ENCODE measurements at regions of chr9 and their contacts with region 1.

Region 1: DNA sequence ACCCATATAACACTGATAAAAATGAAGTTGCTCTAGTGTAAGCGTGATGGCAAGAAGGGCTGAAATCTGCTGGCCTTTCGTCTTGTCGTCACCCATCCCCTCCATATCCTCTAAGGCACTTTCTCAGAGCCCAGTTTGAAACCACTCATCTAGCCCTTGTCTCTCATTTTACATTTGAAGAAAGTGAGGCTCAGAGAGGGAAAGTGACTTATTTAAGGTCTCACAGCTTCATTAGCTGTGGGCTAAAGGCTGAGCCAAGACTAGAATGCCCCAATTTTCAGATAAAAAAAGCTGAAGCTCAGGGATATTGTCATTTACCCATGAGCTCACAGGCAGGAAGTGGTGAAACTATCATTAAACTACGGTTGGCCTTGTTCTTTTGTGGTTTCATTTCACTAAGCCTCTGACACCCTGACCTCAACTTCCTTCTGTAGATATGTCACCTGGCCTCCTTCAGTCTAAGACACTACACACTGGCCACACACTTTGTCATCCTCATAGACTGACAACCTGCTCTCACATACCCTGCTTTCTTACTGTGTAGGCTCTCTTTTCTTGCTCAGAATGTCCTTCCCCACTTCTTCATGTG is 176.7 kb upstream of the DMAC1 start:
- DNase-seq: peak; percentile 69
- H3K4me3 Mint-ChIP-seq: no peak overlapping the region
- H3K27ac Mint-ChIP-seq: peak overlapping the region; percentile 63
- H3K4me1 Mint-ChIP-seq: peaks cover 66% of the 10 kb centered on the region
- H3K27me3 Mint-ChIP-seq: no peaks in the 10 kb centered on the region

Region 2: GRCh38 chr9:6894135-6894534 is 1082.1 kb before region 1 on chr9:
- intact Hi-C with region 1: loop called (anchors 1 kb)
- DNase-seq: no peak
- H3K4me3 Mint-ChIP-seq: peak overlapping the region; percentile 19
- H3K27ac Mint-ChIP-seq: peak overlapping the region; percentile 74
- H3K4me1 Mint-ChIP-seq: peaks cover 51% of the 10 kb centered on the region
- H3K27me3 Mint-ChIP-seq: no peaks in the 10 kb centered on the region

Region 3: GRCh38 chr9:7298123-7298522 is 678.1 kb before region 1 on chr9:
- intact Hi-C with region 1: loop called (anchors 1 kb)
- DNase-seq: peak; percentile 27
- H3K4me3 Mint-ChIP-seq: no peak overlapping the region
- H3K27ac Mint-ChIP-seq: peak overlapping the region; percentile 44
- H3K4me1 Mint-ChIP-seq: peaks cover 21% of the 10 kb centered on the region
- H3K27me3 Mint-ChIP-seq: peaks cover 28% of the 10 kb centered on the region

Region 4: DNA sequence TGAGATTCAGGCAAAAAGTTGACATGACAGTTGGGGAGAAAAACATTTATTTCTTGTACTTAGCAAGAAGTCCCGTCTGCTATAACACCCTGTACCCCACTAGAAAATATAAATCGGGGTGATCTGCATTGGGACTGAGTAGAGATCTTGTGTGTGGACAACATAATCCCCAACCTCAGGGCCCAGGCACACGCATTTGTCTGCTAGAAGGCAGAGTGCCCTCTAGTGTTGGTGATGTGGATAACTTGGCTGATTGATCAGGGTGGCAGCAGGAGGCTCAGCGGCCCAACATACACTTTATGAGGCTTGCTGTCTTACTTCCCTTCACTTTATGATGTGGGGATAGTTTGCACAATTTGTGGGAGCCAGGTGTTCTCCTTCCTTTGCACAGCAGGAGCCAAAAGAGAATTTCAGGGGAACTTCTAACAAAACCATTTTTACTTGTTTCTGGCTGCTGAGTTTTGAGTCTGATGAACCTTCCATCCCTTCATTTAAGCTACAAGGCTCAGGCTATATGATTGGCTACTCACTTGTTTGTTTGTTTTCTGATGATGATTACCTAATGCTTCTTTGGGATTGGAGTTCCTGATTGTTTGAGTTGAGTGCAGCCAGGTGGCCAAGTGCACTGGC is 439.8 kb before region 1 on chr9:
- intact Hi-C with region 1: loop called (anchors 1 kb)
- DNase-seq: peak; percentile 29
- H3K4me3 Mint-ChIP-seq: no peak overlapping the region
- H3K27ac Mint-ChIP-seq: no peak overlapping the region
- H3K4me1 Mint-ChIP-seq: peaks cover 37% of the 10 kb centered on the region
- H3K27me3 Mint-ChIP-seq: peaks cover 10% of the 10 kb centered on the region

Region 5: DNA sequence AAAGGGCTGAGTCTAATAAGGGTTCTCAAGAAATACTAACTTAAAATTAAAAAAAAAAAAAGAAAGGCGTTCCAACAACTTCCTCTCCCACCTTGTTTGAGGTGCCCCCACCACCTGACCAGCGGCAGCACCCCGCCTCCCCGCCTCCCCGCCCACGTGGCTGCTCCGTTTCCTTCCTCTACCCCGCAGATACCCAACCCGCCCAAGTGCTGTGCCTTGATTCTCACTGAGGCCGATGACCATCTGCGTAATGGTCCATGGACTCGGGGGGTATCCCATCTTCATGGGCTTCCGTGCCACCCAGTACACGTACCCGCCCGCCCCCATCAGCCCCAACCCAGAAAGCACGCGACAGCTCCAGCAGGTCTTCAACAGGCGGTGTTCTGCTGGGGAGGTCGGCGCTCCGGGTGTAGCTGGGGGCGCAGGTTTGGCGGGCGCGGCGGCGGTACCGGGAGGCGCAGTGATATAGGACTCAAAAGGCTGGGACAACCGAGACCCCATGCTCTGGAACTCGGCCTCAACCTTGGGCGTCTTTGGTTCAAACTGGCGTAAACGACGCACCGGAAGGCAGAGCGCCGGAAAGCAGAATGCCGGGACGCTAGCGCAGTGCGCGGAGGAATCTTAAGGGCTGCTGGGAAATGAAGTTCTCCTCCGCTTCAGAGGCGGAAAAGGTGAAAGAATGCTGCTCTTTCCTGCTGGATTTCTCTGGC is 176.9 kb before region 1 on chr9 and contains the start of gene DMAC1:
- intact Hi-C with region 1: loop called (anchors 1 kb)
- DNase-seq: peak; percentile 70
- H3K4me3 Mint-ChIP-seq: peak within 1 kb of the TSS; percentile 90
- H3K27ac Mint-ChIP-seq: peak within 1 kb of the TSS; percentile 89
- H3K4me1 Mint-ChIP-seq: peaks cover 23% of the 10 kb centered on the region
- H3K27me3 Mint-ChIP-seq: no peaks in the 10 kb centered on the region
- total RNA-seq, gene DMAC1: 50.5 and 51.0 TPM in 2 replicates

Region 6: GRCh38 chr9:7944572-7944971 is 31.7 kb before region 1 on chr9:
- intact Hi-C with region 1: no loop called
- DNase-seq: no peak
- H3K4me3 Mint-ChIP-seq: no peak overlapping the region
- H3K27ac Mint-ChIP-seq: no peak overlapping the region
- H3K4me1 Mint-ChIP-seq: peaks cover 4% of the 10 kb centered on the region
- H3K27me3 Mint-ChIP-seq: no peaks in the 10 kb centered on the region

Region 7: GRCh38 chr9:8115570-8115969 is 139.3 kb after region 1 on chr9:
- intact Hi-C with region 1: loop called (anchors 1 kb)
- DNase-seq: peak; percentile 8
- H3K4me3 Mint-ChIP-seq: peak overlapping the region; percentile 35
- H3K27ac Mint-ChIP-seq: peak overlapping the region; percentile 88
- H3K4me1 Mint-ChIP-seq: peaks cover 27% of the 10 kb centered on the region
- H3K27me3 Mint-ChIP-seq: no peaks in the 10 kb centered on the region

Region 8: GRCh38 chr9:8346296-8346695 is 370.0 kb after region 1 on chr9:
- intact Hi-C with region 1: no loop called
- DNase-seq: no peak
- H3K4me3 Mint-ChIP-seq: no peak overlapping the region
- H3K27ac Mint-ChIP-seq: no peak overlapping the region
- H3K4me1 Mint-ChIP-seq: no peaks in the 10 kb centered on the region
- H3K27me3 Mint-ChIP-seq: peaks cover 3% of the 10 kb centered on the region

Region 9: DNA sequence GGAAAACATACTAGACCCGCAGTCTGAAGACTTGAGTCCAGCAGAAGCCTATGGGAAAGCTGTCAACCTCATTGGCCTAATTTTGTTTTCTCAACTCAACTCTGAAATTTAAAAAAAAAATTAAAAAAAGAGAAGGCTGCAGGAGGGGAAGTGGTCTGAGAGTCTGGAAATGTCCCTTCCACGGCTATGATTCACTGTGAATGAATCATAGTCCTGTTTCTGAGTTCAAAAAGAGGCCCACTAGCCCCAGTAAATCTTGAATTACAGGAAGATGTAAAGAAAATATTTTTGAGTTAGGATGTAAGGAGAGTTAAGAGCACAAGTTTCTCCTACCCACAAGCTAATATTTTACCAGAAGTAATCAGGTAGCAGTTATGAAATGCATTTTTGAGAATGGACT is 388.8 kb after region 1 on chr9:
- intact Hi-C with region 1: loop called (anchors 1 kb)
- DNase-seq: no peak
- H3K4me3 Mint-ChIP-seq: no peak overlapping the region
- H3K27ac Mint-ChIP-seq: peak overlapping the region; percentile 4
- H3K4me1 Mint-ChIP-seq: peaks cover 12% of the 10 kb centered on the region
- H3K27me3 Mint-ChIP-seq: no peaks in the 10 kb centered on the region

Measured in activated T-helper 2 cell treated with anti-CD3 and anti-CD28 coated beads, Interferon-gamma antibody, Interleukin-2, Interleukin-4, amounts not matched to agents 10 μg/mL and 5 μg/mL and 100 μg/mL, durations not matched to agents 14 hours and 24 hours and 36 hours (primary cell).